SK-N-SH (cell line): ENCODE measurements at regions of chr15 and their contacts with region 1.

Region 1: GRCh38 chr15:73873889-73874511 is 636 bp downstream of the TBC1D21 start:
- DNase-seq: peak; percentile 55
- H3K4me3 ChIP-seq: no peak overlapping the region; a peak in 1 of 4 replicates
- H3K27ac ChIP-seq: no peak overlapping the region
- H3K4me1 ChIP-seq: no peaks in the 10 kb centered on the region
- H3K27me3 ChIP-seq: no peaks in the 10 kb centered on the region; the same call in 1 of the 2 replicates
- CTCF ChIP-seq: peak; percentile 71
- EP300 ChIP-seq: no peak
- RAD21 ChIP-seq: peak; percentile 79

Region 2: GRCh38 chr15:73677146-73677607 is 196.8 kb before region 1 on chr15:
- CTCF ChIA-PET with region 1: no interaction called
- POLR2A ChIA-PET with region 1: no interaction called
- DNase-seq: peak; percentile 60
- H3K4me3 ChIP-seq: no peak overlapping the region
- H3K27ac ChIP-seq: no peak overlapping the region
- H3K4me1 ChIP-seq: no peaks in the 10 kb centered on the region
- H3K27me3 ChIP-seq: peaks cover 22% of the 10 kb centered on the region
- CTCF ChIP-seq: peak; percentile 81
- EP300 ChIP-seq: no peak
- RAD21 ChIP-seq: peak; percentile 73

Region 3: DNA sequence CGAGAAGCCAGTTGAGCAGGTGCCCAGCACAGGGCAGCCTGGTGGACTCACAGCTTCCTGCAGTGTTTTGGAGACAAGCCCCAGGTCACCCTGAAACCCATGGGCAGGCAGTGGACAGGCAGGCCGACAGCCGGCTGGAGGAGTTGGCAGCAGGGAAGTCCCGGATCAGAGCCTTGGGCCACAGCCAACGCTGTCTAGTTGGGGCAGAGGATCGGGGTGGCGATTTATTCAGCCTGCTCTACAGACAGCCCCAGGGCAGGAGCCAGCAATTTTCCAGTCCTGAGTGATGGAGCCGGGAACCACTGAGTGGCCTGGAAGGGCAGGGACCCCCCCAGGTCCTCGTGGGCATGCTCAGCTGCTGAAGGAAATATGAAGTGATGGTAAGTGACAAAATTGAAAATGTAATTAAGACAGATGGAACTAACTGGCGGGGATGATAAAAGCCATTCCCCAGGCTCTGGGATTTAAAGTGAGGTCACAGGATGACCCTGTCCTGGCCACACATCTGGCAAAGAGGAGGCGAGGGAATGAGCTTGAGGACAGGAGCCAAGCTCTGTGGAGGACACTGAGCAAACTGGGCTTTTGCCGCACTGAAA is 35.1 kb before region 1 on chr15:
- CTCF ChIA-PET with region 1: interaction called, 21 read pairs
- POLR2A ChIA-PET with region 1: no interaction called
- DNase-seq: peak; percentile 89
- H3K4me3 ChIP-seq: no peak overlapping the region
- H3K27ac ChIP-seq: peak overlapping the region in 1 of 2 experiments; percentile 76; a peak in 2 of 4 replicates
- H3K4me1 ChIP-seq: peaks cover 0 to 53% of the 10 kb centered on the region in 2 experiments; a peak in 1 of 4 replicates
- H3K27me3 ChIP-seq: peaks cover 35% of the 10 kb centered on the region
- CTCF ChIP-seq: no peak
- EP300 ChIP-seq: peak in 1 of 2 experiments; percentile 94; a peak in 2 of 4 replicates
- RAD21 ChIP-seq: peak; percentile 28; the same call in 1 of the 2 replicates

Region 4: GRCh38 chr15:73885954-73886700 is 12.1 kb after region 1 on chr15:
- CTCF ChIA-PET with region 1: interaction called, 33 read pairs
- POLR2A ChIA-PET with region 1: no interaction called
- DNase-seq: no peak
- H3K4me3 ChIP-seq: no peak overlapping the region
- H3K27ac ChIP-seq: no peak overlapping the region
- H3K4me1 ChIP-seq: peaks cover 0 to 12% of the 10 kb centered on the region in 2 experiments; a peak in 1 of 4 replicates
- H3K27me3 ChIP-seq: peaks cover 8% of the 10 kb centered on the region; the same call in 1 of the 2 replicates
- CTCF ChIP-seq: no peak
- EP300 ChIP-seq: no peak
- RAD21 ChIP-seq: no peak

Region 5: DNA sequence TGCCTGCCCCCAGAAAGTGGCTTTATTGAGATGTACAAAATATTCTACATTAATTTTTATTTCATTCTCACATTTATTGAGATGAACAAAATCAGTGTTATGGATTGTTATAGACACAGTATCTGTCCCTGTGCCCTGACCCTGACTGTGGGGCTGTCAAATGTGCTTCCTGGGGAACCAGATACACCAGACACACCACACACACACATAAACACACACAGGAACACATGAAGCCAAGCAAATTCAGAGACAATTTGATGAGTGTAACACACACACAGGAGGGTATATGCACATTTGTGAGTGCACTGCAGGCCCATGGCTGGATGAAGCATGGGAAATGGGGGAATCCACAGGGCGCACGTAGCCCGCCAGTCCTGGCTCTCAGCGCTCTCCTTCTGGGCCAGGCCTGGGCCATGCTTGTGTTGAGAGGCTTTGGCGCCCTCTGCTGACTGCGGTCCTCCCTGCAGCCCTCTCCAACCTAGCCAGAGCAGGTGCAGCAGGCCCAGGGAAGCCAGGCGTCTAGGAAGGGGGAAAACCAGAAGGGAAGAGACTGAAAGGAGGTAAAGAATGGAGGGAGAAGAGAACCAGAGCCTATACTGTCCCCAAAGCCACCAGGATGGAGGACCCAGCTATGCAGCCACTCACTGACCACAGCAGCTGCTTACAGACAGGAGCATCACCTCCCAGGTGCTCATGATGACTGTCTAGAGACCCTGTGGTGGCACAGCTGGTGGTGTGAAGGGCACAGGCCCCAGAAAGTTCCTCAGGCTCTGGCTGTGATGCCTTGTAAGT is 34.2 kb after region 1 on chr15:
- CTCF ChIA-PET with region 1: interaction called, 148 read pairs
- POLR2A ChIA-PET with region 1: no interaction called
- DNase-seq: peak; percentile 86
- H3K4me3 ChIP-seq: no peak overlapping the region; a peak in 1 of 4 replicates
- H3K27ac ChIP-seq: no peak overlapping the region
- H3K4me1 ChIP-seq: peaks cover 0 to 2% of the 10 kb centered on the region in 2 experiments; a peak in 1 of 4 replicates
- H3K27me3 ChIP-seq: no peaks in the 10 kb centered on the region
- CTCF ChIP-seq: peak; percentile 90
- EP300 ChIP-seq: no peak
- RAD21 ChIP-seq: peak; percentile 91

Region 6: DNA sequence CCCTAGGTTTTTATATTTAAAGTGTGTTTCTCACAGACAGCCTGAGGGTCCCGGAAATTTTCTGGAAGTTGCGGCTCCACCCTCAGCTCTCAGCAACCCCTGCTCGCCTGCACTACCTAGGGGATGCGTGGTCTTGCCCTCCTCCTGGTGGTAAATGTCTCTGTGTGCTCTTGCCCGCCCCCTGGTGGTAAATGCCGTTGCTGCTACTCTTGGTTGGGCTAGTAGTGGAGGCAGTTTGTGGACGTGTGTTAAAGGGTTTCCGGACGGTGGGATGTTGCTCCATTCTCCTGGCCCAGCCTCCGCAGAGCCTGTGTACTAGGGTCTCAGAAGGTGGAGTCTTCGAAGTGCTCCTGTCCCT is 90.7 kb after region 1 on chr15:
- CTCF ChIA-PET with region 1: interaction called, 13 read pairs
- POLR2A ChIA-PET with region 1: no interaction called
- DNase-seq: peak; percentile 82
- H3K4me3 ChIP-seq: peak overlapping the region in 1 of 2 experiments; percentile 29; a peak in 1 of 4 replicates
- H3K27ac ChIP-seq: no peak overlapping the region
- H3K4me1 ChIP-seq: peaks cover 6 to 26% of the 10 kb centered on the region in 2 experiments; a peak in 3 of 4 replicates
- H3K27me3 ChIP-seq: no peaks in the 10 kb centered on the region
- CTCF ChIP-seq: peak; percentile 92
- EP300 ChIP-seq: no peak
- RAD21 ChIP-seq: peak; percentile 70

Region 7: GRCh38 chr15:73979636-73980035 is 105.6 kb after region 1 on chr15:
- CTCF ChIA-PET with region 1: no interaction called
- POLR2A ChIA-PET with region 1: no interaction called
- DNase-seq: no peak
- H3K4me3 ChIP-seq: no peak overlapping the region
- H3K27ac ChIP-seq: no peak overlapping the region
- H3K4me1 ChIP-seq: peaks cover 26 to 32% of the 10 kb centered on the region in 2 experiments; a peak in 3 of 4 replicates
- H3K27me3 ChIP-seq: no peaks in the 10 kb centered on the region
- CTCF ChIP-seq: no peak
- EP300 ChIP-seq: no peak
- RAD21 ChIP-seq: no peak